HEK293 (cell line): ENCODE measurements at regions of chr1 and their contacts with region 1.

Region 1: GRCh38 chr1:160354388-160354985 is 11.3 kb downstream of the NCSTN start:
- H3K4me3 ChIP-seq: no peak overlapping the region
- H3K27ac ChIP-seq: no peak overlapping the region
- H3K4me1 ChIP-seq: no peaks in the 10 kb centered on the region
- CTCF ChIP-seq: 0 out of 2 replicates have a peak, but pooled peaks have one; percentile 53

Region 2: DNA sequence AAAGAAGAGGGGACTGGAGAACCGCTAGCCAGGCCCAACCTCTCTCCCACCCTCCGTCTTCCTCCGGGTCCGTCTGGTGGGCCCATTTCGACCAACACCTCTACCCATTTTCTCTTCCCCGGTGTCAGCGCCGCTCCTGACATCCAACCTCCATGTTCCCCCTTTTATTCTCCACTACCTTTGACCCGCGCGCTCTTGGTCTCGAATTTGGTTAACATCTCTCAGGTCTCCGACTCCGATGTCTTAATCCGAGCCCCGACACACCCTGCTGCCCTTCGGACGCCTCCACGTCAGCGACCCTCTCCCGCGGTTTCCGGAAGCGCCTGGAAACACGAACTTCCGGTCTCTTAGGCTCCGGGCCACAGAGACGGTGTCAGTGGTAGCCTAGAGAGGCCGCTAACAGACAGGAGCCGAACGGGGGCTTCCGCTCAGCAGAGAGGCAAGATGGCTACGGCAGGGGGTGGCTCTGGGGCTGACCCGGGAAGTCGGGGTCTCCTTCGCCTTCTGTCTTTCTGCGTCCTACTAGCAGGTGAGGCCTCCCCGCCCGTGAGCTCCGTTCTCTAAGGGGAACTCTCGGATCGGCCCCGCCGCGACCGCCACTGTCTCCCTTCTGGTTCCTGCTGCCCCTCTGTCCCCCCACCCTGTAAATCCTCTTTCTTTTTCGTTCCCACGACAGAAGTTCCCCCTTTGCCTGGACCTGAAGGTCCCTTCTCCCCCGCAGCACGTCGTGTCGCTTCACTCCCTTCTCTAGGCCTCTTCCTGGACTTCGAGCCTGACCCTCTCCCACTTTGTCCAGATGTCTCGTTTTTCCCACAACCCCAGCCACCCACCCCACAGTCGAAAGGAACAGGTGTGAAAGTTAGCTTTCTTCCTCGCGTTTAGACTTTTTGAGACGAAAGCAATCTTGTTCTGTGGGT is 11.3 kb before region 1 on chr1 and contains the starts of genes COPA and NCSTN:
- CTCF ChIA-PET with region 1: interaction called, 12 read pairs
- POLR2A ChIA-PET with region 1: interaction called, 4 read pairs
- H3K4me3 ChIP-seq: peak within 1 kb of the TSS; percentile 69
- H3K27ac ChIP-seq: peak within 1 kb of the TSS; percentile 59; the same call in 1 of the 2 replicates
- H3K4me1 ChIP-seq: no peaks in the 10 kb centered on the region; the same call in 1 of the 2 replicates
- CTCF ChIP-seq: peak; percentile 42; the same call in 1 of the 2 replicates

Region 3: GRCh38 chr1:160416369-160416768 is 61.9 kb after region 1 on chr1:
- CTCF ChIA-PET with region 1: interaction called, 49 read pairs
- POLR2A ChIA-PET with region 1: no interaction called
- H3K4me3 ChIP-seq: no peak overlapping the region
- H3K27ac ChIP-seq: no peak overlapping the region
- H3K4me1 ChIP-seq: no peaks in the 10 kb centered on the region
- CTCF ChIP-seq: peak; percentile 77